ENCODE measurements at regions of chrX and their contacts with region 1.

Region 1: GRCh38 chrX:101799387-101799786 is 132.4 kb downstream of the ZMAT1 start:
- DNase-seq: peak; percentile 83
- ATAC-seq: peak; percentile 99
- H3K4me3 ChIP-seq: peak overlapping the region; percentile 37
- H3K27ac ChIP-seq: no peak overlapping the region
- H3K4me1 ChIP-seq: no peaks in the 10 kb centered on the region
- H3K27me3 ChIP-seq: no peaks in the 10 kb centered on the region
- CTCF ChIP-seq: peak; percentile 65

Region 2: GRCh38 chrX:101595739-101596419 is 203.5 kb before region 1 on chrX:
- intact Hi-C with region 1: loop called (anchors 10 kb)
- DNase-seq: no peak
- ATAC-seq: peak; percentile 74 to 82
- H3K4me3 ChIP-seq: no peak overlapping the region
- H3K27ac ChIP-seq: no peak overlapping the region
- H3K4me1 ChIP-seq: no peaks in the 10 kb centered on the region
- H3K27me3 ChIP-seq: no peaks in the 10 kb centered on the region
- CTCF ChIP-seq: peak; percentile 54

Region 3: GRCh38 chrX:101906136-101906796 is 106.9 kb after region 1 on chrX:
- intact Hi-C with region 1: no loop called
- DNase-seq: no peak
- ATAC-seq: no peak
- H3K4me3 ChIP-seq: no peak overlapping the region
- H3K27ac ChIP-seq: no peak overlapping the region
- H3K4me1 ChIP-seq: no peaks in the 10 kb centered on the region
- H3K27me3 ChIP-seq: no peaks in the 10 kb centered on the region
- CTCF ChIP-seq: no peak

Measured in lower lobe of right lung (tissue), 2 donors.